PC-3 (cell line): ENCODE measurements at regions of chr12 and their contacts with region 1.

Region 1: DNA sequence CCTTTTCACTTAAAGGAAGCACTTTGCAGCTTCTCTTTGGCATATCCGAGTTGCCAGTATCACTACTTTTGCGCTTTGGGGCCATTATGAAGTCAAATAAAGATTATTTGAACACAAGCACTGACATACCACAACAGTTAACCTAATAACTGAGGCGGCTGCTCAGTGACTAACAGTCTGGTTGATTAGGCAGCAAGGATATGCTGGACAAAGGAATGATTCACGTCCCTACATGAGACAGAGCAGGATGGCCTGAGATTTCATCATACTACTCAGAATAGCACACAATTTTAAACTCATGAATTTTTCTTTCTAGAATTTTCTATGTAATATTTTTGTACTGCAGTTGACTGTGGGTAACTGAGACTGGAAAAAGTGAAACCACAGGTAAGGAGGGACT is 56.9 kb upstream of the E2F7 start:
- DNase-seq: peak; percentile 90
- ATAC-seq: peak; percentile 86
- H3K4me3 ChIP-seq: peak overlapping the region; percentile 16; the same call in 1 of the 2 replicates
- H3K27ac ChIP-seq: peak overlapping the region; percentile 94
- H3K4me1 ChIP-seq: peaks cover 44% of the 10 kb centered on the region
- H3K27me3 ChIP-seq: no peaks in the 10 kb centered on the region
- CTCF ChIP-seq: no peak

Region 2: GRCh38 chr12:77049767-77050353 is 72.4 kb before region 1 on chr12:
- CTCF ChIA-PET with region 1: no interaction called
- POLR2A ChIA-PET with region 1: interaction called, 3 read pairs
- intact Hi-C with region 1: loop called (anchors 5 kb)
- DNase-seq: peak; percentile 83
- ATAC-seq: peak; percentile 95
- H3K4me3 ChIP-seq: no peak overlapping the region
- H3K27ac ChIP-seq: no peak overlapping the region
- H3K4me1 ChIP-seq: no peaks in the 10 kb centered on the region
- H3K27me3 ChIP-seq: no peaks in the 10 kb centered on the region
- CTCF ChIP-seq: peak; percentile 89

Region 3: DNA sequence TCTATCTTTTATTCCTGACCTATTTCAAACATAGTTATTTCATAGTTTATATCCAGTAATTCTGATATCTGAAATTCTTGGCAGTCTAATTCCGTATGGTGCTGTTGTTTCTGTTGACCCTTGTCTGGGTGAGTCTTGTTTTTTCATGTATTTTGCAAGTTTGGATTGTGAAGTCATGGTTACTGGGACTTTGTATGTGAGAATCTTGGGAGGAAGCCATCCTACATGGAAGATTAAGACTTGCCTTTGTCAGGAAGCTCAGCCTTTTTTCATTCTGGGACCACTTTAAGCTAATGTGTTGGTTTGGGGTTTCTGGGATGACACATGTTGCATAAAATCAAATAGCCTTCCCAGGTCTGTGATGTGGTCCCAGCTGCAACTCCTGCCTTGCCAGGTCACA is 134.7 kb after region 1 on chr12:
- CTCF ChIA-PET with region 1: no interaction called
- POLR2A ChIA-PET with region 1: no interaction called
- intact Hi-C with region 1: no loop called
- DNase-seq: no peak
- ATAC-seq: no peak
- H3K4me3 ChIP-seq: no peak overlapping the region
- H3K27ac ChIP-seq: no peak overlapping the region
- H3K4me1 ChIP-seq: no peaks in the 10 kb centered on the region
- H3K27me3 ChIP-seq: peaks cover 10% of the 10 kb centered on the region
- CTCF ChIP-seq: no peak

Region 4: DNA sequence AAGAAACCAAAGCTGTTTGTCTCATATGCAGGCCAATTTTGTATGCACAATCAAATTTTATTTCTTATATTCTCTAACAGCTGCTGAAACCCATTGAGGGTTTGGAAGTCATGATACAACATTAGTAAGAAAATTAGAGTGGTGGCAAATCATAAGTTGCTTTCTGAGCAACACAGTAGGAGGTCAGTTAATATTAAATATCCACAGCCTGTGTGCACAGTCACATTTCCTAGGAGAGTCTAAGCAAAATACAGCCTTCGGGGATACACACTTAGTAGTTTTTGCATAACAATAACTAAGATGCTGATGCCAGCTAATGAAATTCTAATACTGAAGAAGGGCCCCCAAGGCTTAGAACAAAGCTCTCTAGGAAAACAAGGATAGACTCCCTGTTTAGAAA is 152.7 kb after region 1 on chr12:
- CTCF ChIA-PET with region 1: no interaction called
- POLR2A ChIA-PET with region 1: no interaction called
- intact Hi-C with region 1: no loop called
- DNase-seq: no peak
- ATAC-seq: no peak
- H3K4me3 ChIP-seq: no peak overlapping the region
- H3K27ac ChIP-seq: no peak overlapping the region
- H3K4me1 ChIP-seq: no peaks in the 10 kb centered on the region
- H3K27me3 ChIP-seq: peaks cover 18% of the 10 kb centered on the region; the same call in 1 of the 2 replicates
- CTCF ChIP-seq: no peak